ENCODE measurements at regions of chr4 and their contacts with region 1.

Region 1: GRCh38 chr4:68375667-68376559 is 26.0 kb upstream of the YTHDC1 start:
- DNase-seq: peak; percentile 9 to 30 (median 18)
- ATAC-seq: peak; percentile 79
- H3K4me3 ChIP-seq: no peak overlapping the region
- H3K27ac ChIP-seq: no peak overlapping the region
- H3K4me1 ChIP-seq: peaks cover 0 to 7% of the 10 kb centered on the region in 2 experiments; a peak in 2 of 5 replicates
- H3K27me3 ChIP-seq: no peaks in the 10 kb centered on the region
- CTCF ChIP-seq: peak; percentile 59 to 92 (median 86)
- EP300 ChIP-seq: no peak
- POLR2A ChIP-seq: no peak
- RAD21 ChIP-seq: peak; percentile 76 to 79

Region 2: DNA sequence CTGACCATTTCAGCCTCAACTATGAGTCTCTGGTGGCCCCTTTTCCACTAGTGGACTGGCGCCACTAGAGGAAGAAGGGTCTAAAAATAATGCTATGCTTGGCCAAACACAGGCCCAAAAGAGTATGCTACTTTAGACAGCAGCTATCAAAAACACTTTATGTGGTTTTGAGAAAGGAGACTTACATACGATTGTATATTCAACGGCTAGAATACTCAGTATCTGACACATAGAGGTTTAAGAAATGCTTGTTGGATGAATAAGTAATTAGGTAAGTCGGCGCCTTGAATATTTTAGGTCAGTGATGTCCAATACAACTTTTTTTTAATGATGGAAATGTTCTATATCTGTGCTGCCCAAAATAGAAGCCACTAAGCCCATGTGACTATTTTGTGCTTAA is 386.9 kb before region 1 on chr4:
- CTCF ChIA-PET with region 1: no interaction called
- POLR2A ChIA-PET with region 1: no interaction called
- in situ Hi-C with region 1: no loop called
- intact Hi-C with region 1: loop called (anchors 1 kb)
- DNase-seq: no peak
- ATAC-seq: no peak
- H3K4me3 ChIP-seq: no peak overlapping the region
- H3K27ac ChIP-seq: no peak overlapping the region
- H3K4me1 ChIP-seq: no peaks in the 10 kb centered on the region
- H3K27me3 ChIP-seq: no peaks in the 10 kb centered on the region
- CTCF ChIP-seq: no peak
- EP300 ChIP-seq: no peak
- POLR2A ChIP-seq: no peak
- RAD21 ChIP-seq: no peak

Region 3: DNA sequence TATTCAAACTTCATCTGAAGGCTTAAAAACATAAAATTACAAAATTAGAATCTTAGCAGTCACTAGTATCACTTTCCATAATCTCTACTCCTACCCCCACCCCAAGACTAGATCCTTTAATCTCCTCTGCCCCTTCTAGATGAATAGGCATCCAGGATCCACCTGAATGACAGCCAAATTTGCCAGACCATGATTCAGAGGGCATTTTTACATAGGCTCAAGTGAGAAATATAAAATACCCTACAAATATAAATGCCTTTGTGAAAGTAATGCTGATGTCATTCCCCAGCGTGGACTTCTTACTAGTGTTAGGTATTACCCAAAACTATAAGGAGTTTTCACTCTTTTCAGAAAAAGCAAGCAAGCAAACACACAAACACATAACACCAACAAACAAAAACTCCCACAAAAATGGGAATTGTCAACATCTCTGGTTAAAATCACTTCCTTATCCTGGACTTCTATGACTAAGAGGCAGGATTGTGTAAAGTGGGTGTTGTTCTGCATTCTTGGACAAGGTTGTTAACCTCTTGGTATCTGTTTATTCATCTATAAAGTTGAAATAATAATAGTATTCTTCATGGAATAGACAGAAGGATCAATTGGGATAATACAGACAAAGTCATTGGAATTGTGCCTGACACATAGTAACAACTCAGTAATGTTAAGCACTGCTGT is 194.9 kb before region 1 on chr4:
- CTCF ChIA-PET with region 1: no interaction called
- POLR2A ChIA-PET with region 1: no interaction called
- in situ Hi-C with region 1: no loop called
- intact Hi-C with region 1: loop called (anchors 10 kb)
- DNase-seq: no peak
- ATAC-seq: no peak
- H3K4me3 ChIP-seq: no peak overlapping the region
- H3K27ac ChIP-seq: no peak overlapping the region
- H3K4me1 ChIP-seq: peaks cover 0 to 5% of the 10 kb centered on the region in 2 experiments; a peak in 1 of 5 replicates
- H3K27me3 ChIP-seq: peaks cover 0 to 7% of the 10 kb centered on the region in 2 experiments; a peak in 3 of 5 replicates
- CTCF ChIP-seq: no peak
- EP300 ChIP-seq: no peak
- POLR2A ChIP-seq: no peak
- RAD21 ChIP-seq: no peak

Region 4: DNA sequence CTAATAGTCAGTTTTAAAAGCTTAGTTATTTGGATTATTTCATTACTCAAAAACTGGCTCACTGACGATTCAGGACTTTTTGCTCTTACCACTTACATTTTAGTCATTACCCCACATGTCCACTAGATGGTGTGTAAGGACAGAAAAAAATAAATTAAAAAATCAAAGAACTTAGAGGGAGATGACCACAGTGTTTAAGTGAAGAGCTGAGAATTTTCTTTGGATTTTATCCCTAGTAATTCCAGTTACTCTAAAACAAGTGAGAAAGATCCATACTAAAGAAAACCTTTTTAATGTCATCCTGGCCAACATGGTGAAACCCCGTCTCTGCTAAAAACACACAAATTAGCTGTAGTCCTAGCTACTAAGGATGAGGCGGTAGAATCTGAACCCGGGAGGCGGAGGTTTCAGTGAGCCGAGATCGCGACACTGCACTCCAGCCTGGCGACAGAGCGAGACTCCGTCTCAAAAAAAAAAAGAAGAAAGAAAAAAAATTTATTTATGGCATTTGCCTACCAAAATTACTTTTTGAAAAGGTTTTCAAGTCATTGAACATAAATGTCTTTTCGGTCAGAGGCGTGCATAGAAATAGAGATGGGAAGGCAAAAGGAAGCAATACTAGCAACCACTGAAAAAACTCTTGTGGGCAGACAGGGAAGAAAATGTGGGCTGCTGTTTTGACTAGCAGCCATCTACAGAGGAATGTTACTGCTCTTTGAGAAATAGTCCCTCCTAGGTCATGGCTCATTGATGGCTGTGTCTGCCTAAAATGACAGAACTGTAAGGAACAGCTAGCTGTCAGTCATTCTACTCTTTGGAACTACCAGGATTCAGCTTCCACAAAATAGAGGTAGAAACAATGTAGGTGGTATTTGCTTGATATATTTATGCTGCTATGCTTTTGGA is 103.8 kb before region 1 on chr4:
- CTCF ChIA-PET with region 1: interaction called, 5 read pairs
- POLR2A ChIA-PET with region 1: no interaction called
- in situ Hi-C with region 1: no loop called
- intact Hi-C with region 1: loop called (anchors 1 kb)
- DNase-seq: peak; percentile 26 to 57 (median 29)
- ATAC-seq: peak; percentile 69
- H3K4me3 ChIP-seq: no peak overlapping the region
- H3K27ac ChIP-seq: no peak overlapping the region
- H3K4me1 ChIP-seq: peaks cover 0 to 5% of the 10 kb centered on the region in 2 experiments; a peak in 2 of 5 replicates
- H3K27me3 ChIP-seq: no peaks in the 10 kb centered on the region
- CTCF ChIP-seq: peak; percentile 35 to 70 (median 42); a peak in 4 of 6 replicates
- EP300 ChIP-seq: no peak
- POLR2A ChIP-seq: no peak
- RAD21 ChIP-seq: peak; percentile 77 to 79

Region 5: GRCh38 chr4:68490826-68491457 is 115.0 kb after region 1 on chr4:
- CTCF ChIA-PET with region 1: no interaction called
- POLR2A ChIA-PET with region 1: no interaction called
- in situ Hi-C with region 1: no loop called
- intact Hi-C with region 1: no loop called
- DNase-seq: peak in 1 of 4 experiments; percentile 17
- ATAC-seq: no peak
- H3K4me3 ChIP-seq: no peak overlapping the region
- H3K27ac ChIP-seq: no peak overlapping the region
- H3K4me1 ChIP-seq: no peaks in the 10 kb centered on the region
- H3K27me3 ChIP-seq: no peaks in the 10 kb centered on the region
- CTCF ChIP-seq: no peak
- EP300 ChIP-seq: no peak
- POLR2A ChIP-seq: no peak
- RAD21 ChIP-seq: no peak